ENCODE measurements at regions of chr1 and their contacts with region 1.

Region 1: DNA sequence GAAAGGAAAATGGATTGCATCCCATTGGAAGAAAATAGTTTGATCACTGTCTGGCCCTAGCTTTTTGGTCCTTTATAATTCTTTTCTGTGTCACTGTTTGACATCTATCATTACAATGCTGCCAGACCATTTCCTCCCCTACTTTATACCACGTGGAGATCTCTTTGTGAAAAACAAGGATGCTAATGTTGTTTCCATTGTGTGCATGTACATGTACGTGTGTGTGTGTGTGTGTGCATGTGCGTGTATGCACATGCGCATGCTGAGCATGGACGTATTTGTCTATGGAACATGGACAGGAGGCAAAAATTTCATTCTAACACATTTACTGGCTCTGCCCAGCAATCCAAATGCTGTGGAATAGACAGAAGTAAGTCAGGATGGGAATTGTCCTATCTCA is 153.1 kb upstream of the PLXNA2 start:
- DNase-seq: no peak
- H3K4me3 ChIP-seq: no peak overlapping the region
- H3K27ac ChIP-seq: no peak overlapping the region
- H3K4me1 ChIP-seq: no peaks in the 10 kb centered on the region
- H3K27me3 ChIP-seq: no peaks in the 10 kb centered on the region
- CTCF ChIP-seq: no peak
- POLR2A ChIP-seq: no peak

Region 2: DNA sequence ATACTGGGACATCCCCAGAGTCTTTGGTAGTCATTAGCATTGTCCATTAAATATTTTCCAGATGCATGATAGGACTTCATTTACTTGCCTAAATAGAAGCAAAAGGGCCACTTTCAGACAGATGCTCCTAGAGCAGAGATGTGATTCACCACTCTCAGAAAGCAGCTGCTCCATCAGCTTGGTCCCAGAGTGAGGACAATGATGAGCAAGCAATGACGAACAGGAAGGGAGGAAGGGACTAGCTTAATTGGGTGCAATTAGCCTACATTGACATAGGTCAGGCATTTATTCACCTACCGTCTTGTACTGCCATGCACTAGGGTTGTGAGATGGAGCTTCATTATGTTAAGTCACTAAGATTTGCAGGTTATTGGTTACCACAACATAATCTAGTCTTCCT is 68.0 kb before region 1 on chr1:
- intact Hi-C with region 1: no loop called
- DNase-seq: no peak
- H3K4me3 ChIP-seq: no peak overlapping the region
- H3K27ac ChIP-seq: no peak overlapping the region
- H3K4me1 ChIP-seq: peaks cover 4 to 10% of the 10 kb centered on the region in 2 donors
- H3K27me3 ChIP-seq: no peaks in the 10 kb centered on the region
- CTCF ChIP-seq: no peak
- POLR2A ChIP-seq: no peak

Region 3: DNA sequence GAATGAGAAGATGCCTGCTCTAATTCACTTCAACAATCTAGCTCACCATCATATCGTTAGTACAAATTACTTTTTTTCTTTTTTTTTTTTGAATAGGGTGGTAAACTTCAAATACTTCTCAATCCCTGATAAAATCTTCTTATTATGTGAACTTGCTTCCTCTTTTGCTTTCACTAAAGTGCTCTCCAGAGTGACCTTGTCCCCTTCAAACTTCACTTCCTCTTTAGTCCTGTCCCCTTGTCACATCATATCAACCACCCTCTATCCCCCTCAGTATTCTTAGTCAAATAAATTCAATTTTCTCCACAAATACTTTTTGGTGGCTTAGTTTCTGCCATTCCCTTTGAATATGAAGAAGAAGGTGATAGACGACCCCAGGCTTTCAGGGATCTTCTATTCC is 28.2 kb before region 1 on chr1:
- intact Hi-C with region 1: loop called in 1 of 2 experiments (anchors 2 kb)
- DNase-seq: no peak
- H3K4me3 ChIP-seq: no peak overlapping the region
- H3K27ac ChIP-seq: no peak overlapping the region
- H3K4me1 ChIP-seq: no peaks in the 10 kb centered on the region
- H3K27me3 ChIP-seq: no peaks in the 10 kb centered on the region
- CTCF ChIP-seq: no peak
- POLR2A ChIP-seq: no peak